HepG2 (cell line): ENCODE measurements at regions of chr2 and their contacts with region 1.

Region 1: DNA sequence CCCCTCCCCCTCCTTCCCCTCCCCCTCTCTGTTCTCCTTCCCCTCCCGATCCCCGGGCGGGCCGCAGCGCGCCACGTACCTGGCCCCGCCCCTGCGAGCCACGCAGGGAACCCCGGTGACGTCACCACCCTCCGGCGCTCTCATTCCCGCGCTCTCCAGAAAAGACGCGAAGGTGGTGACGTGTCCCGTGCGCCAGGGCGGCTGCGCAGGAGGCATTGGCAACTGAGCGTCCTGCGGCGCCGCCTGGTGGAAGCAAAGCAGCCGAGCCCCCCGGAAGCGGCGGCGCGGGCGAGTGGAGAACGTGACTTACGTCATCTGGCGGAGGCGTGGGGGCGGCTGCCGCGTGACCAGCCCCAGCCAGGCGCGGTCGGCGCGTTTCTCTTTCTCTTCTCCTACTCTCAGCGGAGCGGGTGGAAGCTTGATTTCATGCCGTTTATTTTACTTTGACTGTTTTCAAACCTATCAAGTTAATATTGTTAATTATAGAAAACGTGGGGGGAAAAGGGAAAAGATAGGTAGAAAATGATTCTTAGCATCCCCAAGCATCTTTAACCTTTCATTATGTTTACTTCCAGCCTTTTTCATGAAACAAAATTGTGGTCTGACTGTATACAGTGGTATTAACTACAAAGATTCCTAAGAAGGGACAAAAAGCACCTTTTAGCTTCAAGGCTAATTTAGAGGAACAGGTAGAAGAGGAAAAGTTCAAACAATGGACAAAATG is 48.1 kb downstream of the C2orf42 start:
- DNase-seq: peak; percentile 99
- ATAC-seq: peak; percentile 68
- H3K4me3 ChIP-seq: peak overlapping the region; percentile 43 to 67 (median 61)
- H3K27ac ChIP-seq: peak overlapping the region; percentile 93
- H3K4me1 ChIP-seq: peaks cover 56% of the 10 kb centered on the region
- H3K27me3 ChIP-seq: no peaks in the 10 kb centered on the region
- CTCF ChIP-seq: peak; percentile 100
- EP300 ChIP-seq: peak; percentile 72 to 87
- POLR2A ChIP-seq: peak in 1 of 2 experiments; percentile 55; a peak in 2 of 4 replicates
- RAD21 ChIP-seq: peak; percentile 100

Region 2: GRCh38 chr2:69946351-69947077 is 196.2 kb before region 1 on chr2:
- CTCF ChIA-PET with region 1: no interaction called
- POLR2A ChIA-PET with region 1: interaction called, 4 read pairs
- in situ Hi-C with region 1: no loop called
- intact Hi-C with region 1: loop called (anchors 1 kb)
- DNase-seq: peak; percentile 82
- ATAC-seq: peak; percentile 62
- H3K4me3 ChIP-seq: peak overlapping the region; percentile 46 to 59 (median 48)
- H3K27ac ChIP-seq: peak overlapping the region; percentile 51
- H3K4me1 ChIP-seq: peaks cover 42% of the 10 kb centered on the region
- H3K27me3 ChIP-seq: no peaks in the 10 kb centered on the region
- CTCF ChIP-seq: 0 out of 2 replicates have a peak, but pooled peaks have one; percentile 7
- EP300 ChIP-seq: peak in 1 of 2 experiments; percentile 89; a peak in 2 of 4 replicates
- POLR2A ChIP-seq: no peak
- RAD21 ChIP-seq: no peak

Region 3: GRCh38 chr2:70086838-70087701 is 55.7 kb before region 1 on chr2 and contains the start of gene PCBP1:
- CTCF ChIA-PET with region 1: interaction called, 3 read pairs
- POLR2A ChIA-PET with region 1: interaction called, 124 read pairs
- in situ Hi-C with region 1: loop called (anchors 5 kb)
- intact Hi-C with region 1: loop called (anchors 1 kb)
- DNase-seq: peak; percentile 94
- ATAC-seq: peak; percentile 49
- H3K4me3 ChIP-seq: peak within 1 kb of the TSS; percentile 93 to 95 (median 95)
- H3K27ac ChIP-seq: peak within 1 kb of the TSS; percentile 99
- H3K4me1 ChIP-seq: peaks cover 56% of the 10 kb centered on the region
- H3K27me3 ChIP-seq: no peaks in the 10 kb centered on the region; a peak in 1 of 5 replicates
- CTCF ChIP-seq: no peak
- EP300 ChIP-seq: no peak; a peak in 2 of 4 replicates
- POLR2A ChIP-seq: peak; percentile 71 to 81
- RAD21 ChIP-seq: peak; percentile 50; the same call in 1 of the 2 replicates
- total RNA-seq, gene PCBP1: 32.0 and 104 TPM in 2 replicates

Region 4: DNA sequence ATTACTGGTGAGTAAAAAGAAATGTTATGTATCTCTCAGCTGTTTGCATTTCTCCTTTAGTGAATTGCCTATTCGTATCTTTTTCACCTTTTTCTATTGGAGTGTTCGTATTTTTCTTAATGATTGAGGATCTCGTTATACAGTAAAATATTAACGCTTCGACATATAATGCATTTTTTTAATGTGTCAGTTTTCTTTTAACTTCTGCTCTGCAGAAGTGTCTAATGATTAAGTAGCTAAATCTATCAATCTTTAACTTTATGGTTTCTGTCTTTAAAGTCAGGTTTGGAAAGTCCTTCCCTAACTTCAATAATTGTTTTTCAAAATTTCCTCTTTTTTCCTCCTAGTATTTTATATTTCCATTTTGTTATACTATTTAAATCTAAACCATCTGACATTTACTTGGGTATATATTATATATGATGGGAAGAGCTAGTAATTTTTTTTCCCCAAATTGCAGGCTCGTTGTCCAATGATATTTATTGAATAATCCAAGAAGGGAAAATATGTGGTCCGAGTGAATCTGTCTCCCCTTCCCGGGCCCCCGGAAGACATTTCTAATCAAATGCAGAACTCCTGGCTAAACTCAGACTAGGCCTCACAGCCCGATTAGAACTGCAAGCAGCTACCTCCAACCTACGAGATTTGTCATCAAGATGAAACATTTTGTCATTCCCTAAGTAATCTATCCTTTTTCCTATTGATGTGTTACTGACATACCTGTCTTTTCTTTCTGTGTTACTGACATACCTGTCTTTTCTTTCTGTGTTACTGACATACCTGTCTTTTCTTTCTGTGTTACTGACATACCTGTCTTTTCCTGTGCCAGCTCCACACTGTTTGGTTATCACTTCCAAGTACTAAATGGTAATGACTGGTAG is 38.3 kb before region 1 on chr2:
- CTCF ChIA-PET with region 1: no interaction called
- POLR2A ChIA-PET with region 1: interaction called, 88 read pairs
- in situ Hi-C with region 1: no loop called
- intact Hi-C with region 1: loop called (anchors 1 kb)
- DNase-seq: peak; percentile 69
- ATAC-seq: no peak
- H3K4me3 ChIP-seq: peak overlapping the region in 2 of 3 experiments; percentile 45 to 59; a peak in 4 of 6 replicates
- H3K27ac ChIP-seq: peak overlapping the region; percentile 55
- H3K4me1 ChIP-seq: peaks cover 54% of the 10 kb centered on the region
- H3K27me3 ChIP-seq: no peaks in the 10 kb centered on the region; a peak in 1 of 5 replicates
- CTCF ChIP-seq: no peak
- EP300 ChIP-seq: peak in 1 of 2 experiments; percentile 32; a peak in 1 of 4 replicates
- POLR2A ChIP-seq: no peak
- RAD21 ChIP-seq: no peak

Region 5: GRCh38 chr2:70190418-70191243 is 47.9 kb after region 1 on chr2 and contains the start of gene C2orf42:
- CTCF ChIA-PET with region 1: no interaction called
- POLR2A ChIA-PET with region 1: interaction called, 29 read pairs
- in situ Hi-C with region 1: no loop called
- intact Hi-C with region 1: loop called (anchors 2 kb)
- DNase-seq: peak; percentile 98
- ATAC-seq: peak; percentile 96
- H3K4me3 ChIP-seq: peak within 1 kb of the TSS; percentile 69 to 88 (median 86)
- H3K27ac ChIP-seq: peak within 1 kb of the TSS; percentile 83
- H3K4me1 ChIP-seq: peaks cover 36% of the 10 kb centered on the region
- H3K27me3 ChIP-seq: no peaks in the 10 kb centered on the region; a peak in 1 of 5 replicates
- CTCF ChIP-seq: peak; percentile 54
- EP300 ChIP-seq: 0 out of 4 replicates have a peak, but pooled peaks of 1 of the 2 experiments have one; percentile 60
- POLR2A ChIP-seq: peak; percentile 96 to 99
- RAD21 ChIP-seq: peak; percentile 29
- total RNA-seq, gene C2orf42: 9.9 and 11.1 TPM in 2 replicates

Region 6: GRCh38 chr2:70258532-70258874 is 115.8 kb after region 1 on chr2:
- CTCF ChIA-PET with region 1: no interaction called
- POLR2A ChIA-PET with region 1: interaction called, 12 read pairs
- in situ Hi-C with region 1: no loop called
- intact Hi-C with region 1: no loop called
- DNase-seq: peak; percentile 41
- ATAC-seq: peak; percentile 70
- H3K4me3 ChIP-seq: peak overlapping the region; percentile 83 to 90 (median 83)
- H3K27ac ChIP-seq: peak overlapping the region; percentile 82
- H3K4me1 ChIP-seq: peaks cover 44% of the 10 kb centered on the region
- H3K27me3 ChIP-seq: no peaks in the 10 kb centered on the region; a peak in 1 of 5 replicates
- CTCF ChIP-seq: no peak
- EP300 ChIP-seq: no peak
- POLR2A ChIP-seq: no peak
- RAD21 ChIP-seq: no peak